ENCODE measurements at regions of chr14 and their contacts with region 1.

Region 1: GRCh38 chr14:21233457-21234076 is 35.7 kb downstream of the HNRNPC start:
- DNase-seq: peak in 2 of 5 donors; percentile 20 to 47
- H3K4me3 ChIP-seq: no peak overlapping the region
- H3K4me3 Mint-ChIP-seq: peak overlapping the region in 7 of 8 donors; percentile 29 to 83 (median 60)
- H3K27ac ChIP-seq: peak overlapping the region; percentile 11
- H3K27ac Mint-ChIP-seq: peak overlapping the region; percentile 57 to 91 (median 89)
- H3K4me1 ChIP-seq: peaks cover 100% of the 10 kb centered on the region
- H3K4me1 Mint-ChIP-seq: peaks cover 70 to 93% (median 81%) of the 10 kb centered on the region in 4 donors
- H3K27me3 ChIP-seq: no peaks in the 10 kb centered on the region
- H3K27me3 Mint-ChIP-seq: no peaks in the 10 kb centered on the region

Region 2: GRCh38 chr14:20935303-20935984 is 298.1 kb before region 1 on chr14:
- CTCF ChIA-PET with region 1: no interaction called
- POLR2A ChIA-PET with region 1: no interaction called
- intact Hi-C with region 1: no loop called
- DNase-seq: no peak
- H3K4me3 ChIP-seq: no peak overlapping the region
- H3K4me3 Mint-ChIP-seq: no peak overlapping the region
- H3K27ac ChIP-seq: no peak overlapping the region
- H3K27ac Mint-ChIP-seq: peak overlapping the region in 1 of 7 donors; percentile 1
- H3K4me1 ChIP-seq: no peaks in the 10 kb centered on the region
- H3K4me1 Mint-ChIP-seq: no peaks in the 10 kb centered on the region
- H3K27me3 ChIP-seq: no peaks in the 10 kb centered on the region
- H3K27me3 Mint-ChIP-seq: peaks cover 6 to 8% of the 10 kb centered on the region in 2 donors

Region 3: GRCh38 chr14:21215130-21215878 is 18.3 kb before region 1 on chr14:
- CTCF ChIA-PET with region 1: interaction called, 4 read pairs
- POLR2A ChIA-PET with region 1: interaction called, 16 read pairs
- intact Hi-C with region 1: loop called (anchors 2 kb)
- DNase-seq: no peak
- H3K4me3 ChIP-seq: no peak overlapping the region
- H3K4me3 Mint-ChIP-seq: peak overlapping the region; percentile 14 to 74 (median 58)
- H3K27ac ChIP-seq: peak overlapping the region; percentile 23
- H3K27ac Mint-ChIP-seq: peak overlapping the region; percentile 45 to 90 (median 71)
- H3K4me1 ChIP-seq: peaks cover 72% of the 10 kb centered on the region
- H3K4me1 Mint-ChIP-seq: peaks cover 38 to 77% (median 62%) of the 10 kb centered on the region in 4 donors
- H3K27me3 ChIP-seq: no peaks in the 10 kb centered on the region
- H3K27me3 Mint-ChIP-seq: no peaks in the 10 kb centered on the region

Region 4: GRCh38 chr14:21220874-21221477 is 12.6 kb before region 1 on chr14:
- CTCF ChIA-PET with region 1: interaction called, 4 read pairs
- POLR2A ChIA-PET with region 1: interaction called, 16 read pairs
- intact Hi-C with region 1: loop called (anchors 2 kb)
- DNase-seq: no peak
- H3K4me3 ChIP-seq: no peak overlapping the region
- H3K4me3 Mint-ChIP-seq: peak overlapping the region; percentile 14 to 69 (median 50)
- H3K27ac ChIP-seq: no peak overlapping the region
- H3K27ac Mint-ChIP-seq: peak overlapping the region; percentile 45 to 95 (median 83)
- H3K4me1 ChIP-seq: peaks cover 98% of the 10 kb centered on the region
- H3K4me1 Mint-ChIP-seq: peaks cover 45 to 86% (median 64%) of the 10 kb centered on the region in 4 donors
- H3K27me3 ChIP-seq: no peaks in the 10 kb centered on the region
- H3K27me3 Mint-ChIP-seq: no peaks in the 10 kb centered on the region

Region 5: DNA sequence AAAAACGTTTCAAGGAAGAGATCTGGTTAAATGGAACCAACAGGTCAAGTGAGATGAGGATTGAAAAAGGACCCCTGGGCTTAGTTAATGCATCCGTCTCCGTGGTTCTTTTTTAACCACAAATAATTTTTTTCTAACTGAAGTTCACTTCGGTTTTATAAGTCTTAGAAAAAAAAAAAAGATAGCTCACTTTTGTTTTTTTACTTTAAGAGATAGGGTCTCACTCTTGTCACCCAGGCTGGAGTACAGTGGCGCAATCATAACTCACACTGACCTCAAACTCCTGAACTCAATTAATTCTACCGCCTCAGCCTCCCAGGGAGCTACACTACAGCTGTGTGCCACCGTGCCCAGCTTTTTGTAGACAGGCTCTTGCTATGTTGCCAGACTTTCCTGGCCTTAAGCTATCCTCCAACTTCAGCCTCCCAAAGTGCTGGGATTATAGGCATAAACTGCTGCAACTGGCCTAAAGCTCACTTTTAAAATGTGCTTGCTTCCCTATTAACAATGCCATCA is 23.9 kb after region 1 on chr14:
- CTCF ChIA-PET with region 1: interaction called, 5 read pairs
- POLR2A ChIA-PET with region 1: interaction called, 15 read pairs
- intact Hi-C with region 1: no loop called
- DNase-seq: no peak
- H3K4me3 ChIP-seq: peak overlapping the region in 1 of 2 donors; percentile 1
- H3K4me3 Mint-ChIP-seq: peak overlapping the region; percentile 69 to 82 (median 76)
- H3K27ac ChIP-seq: peak overlapping the region; percentile 27
- H3K27ac Mint-ChIP-seq: peak overlapping the region; percentile 14 to 90 (median 78)
- H3K4me1 ChIP-seq: peaks cover 89% of the 10 kb centered on the region
- H3K4me1 Mint-ChIP-seq: peaks cover 56 to 91% (median 73%) of the 10 kb centered on the region in 4 donors
- H3K27me3 ChIP-seq: no peaks in the 10 kb centered on the region
- H3K27me3 Mint-ChIP-seq: no peaks in the 10 kb centered on the region

Region 6: DNA sequence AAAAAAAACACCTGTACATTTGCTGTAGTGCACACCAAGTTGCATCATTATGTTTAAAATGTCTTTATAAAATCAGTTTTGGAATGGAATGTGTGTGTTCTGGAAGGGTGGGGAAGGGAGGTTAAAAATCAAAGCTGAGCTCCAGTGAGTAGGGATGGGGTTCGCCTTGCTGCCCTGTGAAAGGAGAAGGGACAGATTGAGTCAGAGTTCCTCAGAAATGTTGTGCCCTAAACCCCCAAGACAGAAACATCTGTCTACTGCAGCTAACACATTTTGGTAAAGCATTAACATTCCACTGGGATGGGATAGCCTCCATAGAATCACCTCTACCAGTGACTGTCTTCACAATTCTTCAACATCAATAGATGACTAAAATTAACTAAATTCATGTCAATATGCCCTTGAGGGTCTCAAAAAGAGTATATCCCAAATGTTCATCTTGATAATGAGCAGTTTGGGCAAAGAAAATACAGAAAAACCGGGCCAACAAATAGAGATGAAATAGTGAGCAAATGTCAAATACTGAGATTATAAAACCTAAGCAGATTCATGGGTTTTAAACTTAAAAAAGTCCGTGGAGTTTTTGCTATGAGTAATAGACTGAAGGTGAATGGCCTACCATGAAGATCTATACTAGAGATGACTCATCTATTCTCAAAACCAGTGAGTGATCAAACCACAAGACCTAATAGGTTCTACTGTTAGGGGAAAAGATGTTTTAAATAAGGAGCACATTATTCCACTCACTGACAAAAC is 30.3 kb after region 1 on chr14:
- CTCF ChIA-PET with region 1: interaction called, 9 read pairs
- POLR2A ChIA-PET with region 1: interaction called, 24 read pairs
- intact Hi-C with region 1: loop called (anchors 2 kb)
- DNase-seq: peak in 2 of 5 donors; percentile 46 to 49
- H3K4me3 ChIP-seq: peak overlapping the region; percentile 3 to 4
- H3K4me3 Mint-ChIP-seq: peak overlapping the region; percentile 64 to 100 (median 100)
- H3K27ac ChIP-seq: peak overlapping the region; percentile 98
- H3K27ac Mint-ChIP-seq: peak overlapping the region; percentile 55 to 96 (median 83)
- H3K4me1 ChIP-seq: peaks cover 91% of the 10 kb centered on the region
- H3K4me1 Mint-ChIP-seq: peaks cover 59 to 89% (median 75%) of the 10 kb centered on the region in 4 donors
- H3K27me3 ChIP-seq: no peaks in the 10 kb centered on the region
- H3K27me3 Mint-ChIP-seq: no peaks in the 10 kb centered on the region

Region 7: DNA sequence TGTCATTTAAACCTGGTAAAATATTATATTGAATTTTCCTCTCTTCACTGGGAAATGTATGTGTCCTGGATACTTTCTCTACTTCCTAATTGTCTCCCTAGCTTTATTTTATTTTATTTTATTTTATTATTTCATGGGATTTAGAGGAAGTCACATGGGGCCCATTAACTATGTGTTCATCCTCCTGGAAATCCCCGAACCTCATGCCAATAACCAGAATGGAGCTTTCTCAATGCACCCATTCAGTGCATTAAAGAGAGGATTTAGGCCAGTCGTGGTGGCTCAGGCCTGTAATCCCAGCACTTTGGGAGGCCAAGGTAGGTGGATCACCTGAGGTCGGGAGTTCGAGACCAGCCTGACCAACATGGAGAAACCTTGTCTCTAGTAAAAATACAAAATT is 45.1 kb after region 1 on chr14:
- CTCF ChIA-PET with region 1: no interaction called
- POLR2A ChIA-PET with region 1: no interaction called
- intact Hi-C with region 1: no loop called
- DNase-seq: no peak
- H3K4me3 ChIP-seq: no peak overlapping the region
- H3K4me3 Mint-ChIP-seq: no peak overlapping the region
- H3K27ac ChIP-seq: no peak overlapping the region
- H3K27ac Mint-ChIP-seq: no peak overlapping the region
- H3K4me1 ChIP-seq: no peaks in the 10 kb centered on the region
- H3K4me1 Mint-ChIP-seq: peaks cover 3 to 5% (median 4%) of the 10 kb centered on the region in 4 donors
- H3K27me3 ChIP-seq: no peaks in the 10 kb centered on the region
- H3K27me3 Mint-ChIP-seq: no peaks in the 10 kb centered on the region

Region 8: DNA sequence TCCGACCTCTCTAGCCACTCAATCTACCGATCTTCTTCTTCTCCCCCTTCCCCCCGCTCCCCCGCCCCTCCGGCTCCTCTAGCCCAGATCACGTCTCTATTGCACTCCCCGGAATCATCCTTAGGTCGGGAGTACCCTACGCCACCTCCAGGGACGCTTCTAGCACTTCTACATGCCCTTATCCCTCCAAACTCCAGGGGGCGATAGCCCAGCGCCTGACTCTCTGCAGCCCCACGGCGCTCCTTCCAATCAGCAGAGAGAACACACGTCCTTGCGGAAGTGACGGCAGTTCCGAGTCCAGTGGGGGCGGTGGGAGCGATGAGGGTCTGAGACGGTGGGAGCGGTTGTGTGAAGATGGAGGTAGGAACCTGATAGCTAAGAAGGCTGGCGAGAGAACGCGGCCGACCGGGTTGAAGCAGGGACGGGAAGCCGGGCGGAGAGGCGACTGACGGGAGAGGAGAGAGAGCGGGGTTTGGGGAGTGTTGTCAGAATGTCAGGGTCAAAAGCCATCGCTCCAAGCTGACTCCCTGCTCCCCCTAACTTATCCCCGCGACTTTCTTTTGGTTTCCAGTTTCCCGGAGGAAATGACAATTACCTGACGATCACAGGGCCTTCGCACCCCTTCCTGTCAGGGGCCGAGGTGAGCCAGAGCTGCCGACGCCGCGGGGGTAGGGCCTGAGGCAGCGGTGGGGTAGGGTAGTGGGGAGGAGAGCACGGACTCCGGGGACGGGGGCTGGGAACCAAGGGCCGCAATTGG is 243.5 kb after region 1 on chr14 and contains the starts of genes RAB2B and TOX4:
- CTCF ChIA-PET with region 1: no interaction called
- POLR2A ChIA-PET with region 1: no interaction called
- intact Hi-C with region 1: loop called (anchors 5 kb)
- DNase-seq: peak; percentile 98
- H3K4me3 ChIP-seq: peak within 1 kb of the TSS; percentile 69 to 97
- H3K4me3 Mint-ChIP-seq: peak within 1 kb of the TSS; percentile 98 to 100 (median 100)
- H3K27ac ChIP-seq: peak within 1 kb of the TSS; percentile 81
- H3K27ac Mint-ChIP-seq: peak within 1 kb of the TSS; percentile 95 to 100 (median 100)
- H3K4me1 ChIP-seq: peaks cover 27% of the 10 kb centered on the region
- H3K4me1 Mint-ChIP-seq: peaks cover 28 to 63% (median 45%) of the 10 kb centered on the region in 4 donors
- H3K27me3 ChIP-seq: no peaks in the 10 kb centered on the region
- H3K27me3 Mint-ChIP-seq: no peaks in the 10 kb centered on the region
- total RNA-seq, gene RAB2B: 29.3 to 30.4 TPM
- total RNA-seq, gene TOX4: 83.6 to 86.0 TPM